Activated naive CD4-positive, alpha-beta T cell treated with anti-CD3 and anti-CD28 coated beads, Interleukin-2, amount 10 ng/mL, durations not matched to agents 7 days and 5 days (primary cell): ENCODE measurements at regions of chr19 and their contacts with region 1.

Region 1: GRCh38 chr19:6021878-6022569 is 44.1 kb upstream of the RANBP3 start:
- DNase-seq: peak; percentile 88
- H3K4me3 Mint-ChIP-seq: no peak overlapping the region
- H3K27ac Mint-ChIP-seq: no peak overlapping the region
- H3K4me1 Mint-ChIP-seq: peaks cover 11% of the 10 kb centered on the region
- H3K27me3 Mint-ChIP-seq: peaks cover 14% of the 10 kb centered on the region

Region 2: GRCh38 chr19:5904352-5905113 is 117.5 kb before region 1 on chr19 and contains the start of gene VMAC:
- CTCF ChIA-PET with region 1: interaction called, 13 read pairs
- DNase-seq: peak; percentile 100
- H3K4me3 Mint-ChIP-seq: peak within 1 kb of the TSS; percentile 91
- H3K27ac Mint-ChIP-seq: peak within 1 kb of the TSS; percentile 100
- H3K4me1 Mint-ChIP-seq: peaks cover 35% of the 10 kb centered on the region
- H3K27me3 Mint-ChIP-seq: no peaks in the 10 kb centered on the region

Region 3: DNA sequence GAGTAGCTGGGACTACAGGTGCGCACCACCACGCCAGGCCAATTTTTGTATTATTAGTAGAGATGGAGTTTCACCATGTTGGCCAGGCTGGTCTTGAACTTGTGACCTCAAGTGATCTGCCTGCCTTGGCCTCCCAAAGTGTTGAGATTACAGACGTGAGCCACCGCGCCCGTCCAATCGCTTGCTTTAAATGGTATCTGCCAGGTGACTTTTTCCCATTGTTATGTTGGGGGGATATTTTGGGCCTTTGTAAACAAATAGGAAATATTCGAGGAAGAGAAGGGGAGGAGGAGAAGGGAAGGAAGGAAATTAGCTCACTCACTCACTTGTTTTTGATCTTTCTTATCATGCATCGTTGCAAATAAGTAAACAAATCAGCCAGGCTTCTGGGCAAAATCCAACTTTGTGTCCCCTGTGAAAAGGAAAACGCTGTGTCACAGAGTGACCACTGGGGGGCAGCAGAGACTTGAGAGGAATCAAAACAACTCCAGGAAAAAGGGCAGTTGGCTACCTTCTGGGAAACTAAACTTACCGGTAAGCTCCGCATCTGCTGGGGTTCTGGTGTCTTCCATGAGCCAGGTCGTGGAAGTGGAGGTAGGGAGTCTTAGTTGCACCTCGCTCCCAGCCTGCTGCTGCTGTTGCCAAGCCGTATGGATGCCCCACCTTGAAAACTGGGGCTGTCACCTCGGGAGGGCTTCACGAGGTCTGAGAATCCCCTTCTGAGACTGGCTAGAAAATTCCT is 34.8 kb before region 1 on chr19:
- CTCF ChIA-PET with region 1: interaction called, 48 read pairs
- DNase-seq: peak; percentile 85
- H3K4me3 Mint-ChIP-seq: peak overlapping the region; percentile 55
- H3K27ac Mint-ChIP-seq: peak overlapping the region; percentile 9
- H3K4me1 Mint-ChIP-seq: peaks cover 41% of the 10 kb centered on the region
- H3K27me3 Mint-ChIP-seq: peaks cover 7% of the 10 kb centered on the region